ENCODE measurements at regions of chr13 and their contacts with region 1.

Region 1: GRCh38 chr13:49792550-49793324 is at the start of gene KPNA3:
- DNase-seq: peak; percentile 98
- H3K4me3 ChIP-seq: peak within 1 kb of the TSS; percentile 75
- H3K27ac ChIP-seq: peak within 1 kb of the TSS; percentile 90
- H3K4me1 ChIP-seq: peaks cover 24% of the 10 kb centered on the region
- CTCF ChIP-seq: no peak; the same call in 1 of the 2 replicates
- total RNA-seq, gene KPNA3: 17.2 and 18.2 TPM in 2 replicates

Region 2: DNA sequence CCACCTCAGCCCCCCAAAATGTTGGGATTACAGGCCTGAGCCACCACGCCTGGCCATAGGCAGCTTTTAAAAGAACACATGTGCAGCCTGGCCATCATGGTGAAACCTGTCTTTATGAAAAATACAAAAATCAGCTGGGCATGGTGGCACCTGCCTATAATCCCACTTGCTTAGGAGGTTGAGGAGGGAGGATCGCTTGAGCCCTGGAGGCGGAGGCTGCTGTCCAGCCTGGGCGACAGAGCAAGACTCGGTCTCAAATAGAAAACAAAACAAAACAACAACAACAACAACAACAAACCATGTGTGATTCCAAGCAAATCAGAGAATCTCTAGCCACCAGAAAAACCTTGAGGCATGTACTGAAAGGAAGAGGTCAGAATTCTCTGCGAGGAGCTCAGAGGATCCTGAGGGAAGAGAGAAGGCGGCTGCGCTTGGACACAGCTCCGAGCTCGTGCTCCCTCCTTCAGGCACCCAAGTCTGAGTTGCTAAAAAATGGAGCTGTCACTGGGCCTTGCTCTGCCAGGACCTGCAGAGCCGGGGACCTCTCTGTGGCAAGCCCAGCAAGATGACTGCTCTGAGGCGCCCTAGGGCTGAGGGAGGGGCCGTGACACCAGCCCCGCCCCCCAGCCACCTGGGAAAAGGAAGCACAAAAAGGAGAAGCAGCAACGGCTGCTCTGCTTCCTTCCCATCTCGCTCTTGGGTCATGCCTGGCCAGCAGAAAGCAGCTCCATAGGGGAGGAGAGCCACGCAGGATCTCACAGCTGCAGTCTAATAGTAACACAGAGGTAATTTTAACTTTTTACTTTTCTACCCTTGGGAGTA is 164.7 kb before region 1 on chr13 and contains the start of gene ARL11:
- CTCF ChIA-PET with region 1: interaction called, 4 read pairs
- POLR2A ChIA-PET with region 1: interaction called, 10 read pairs
- intact Hi-C with region 1: loop called (anchors 2 kb)
- DNase-seq: peak; percentile 93
- H3K4me3 ChIP-seq: peak within 1 kb of the TSS; percentile 90
- H3K27ac ChIP-seq: peak within 1 kb of the TSS; percentile 72
- H3K4me1 ChIP-seq: peaks cover 34% of the 10 kb centered on the region
- CTCF ChIP-seq: no peak
- total RNA-seq, gene ARL11: 5.9 and 8.3 TPM in 2 replicates

Region 3: DNA sequence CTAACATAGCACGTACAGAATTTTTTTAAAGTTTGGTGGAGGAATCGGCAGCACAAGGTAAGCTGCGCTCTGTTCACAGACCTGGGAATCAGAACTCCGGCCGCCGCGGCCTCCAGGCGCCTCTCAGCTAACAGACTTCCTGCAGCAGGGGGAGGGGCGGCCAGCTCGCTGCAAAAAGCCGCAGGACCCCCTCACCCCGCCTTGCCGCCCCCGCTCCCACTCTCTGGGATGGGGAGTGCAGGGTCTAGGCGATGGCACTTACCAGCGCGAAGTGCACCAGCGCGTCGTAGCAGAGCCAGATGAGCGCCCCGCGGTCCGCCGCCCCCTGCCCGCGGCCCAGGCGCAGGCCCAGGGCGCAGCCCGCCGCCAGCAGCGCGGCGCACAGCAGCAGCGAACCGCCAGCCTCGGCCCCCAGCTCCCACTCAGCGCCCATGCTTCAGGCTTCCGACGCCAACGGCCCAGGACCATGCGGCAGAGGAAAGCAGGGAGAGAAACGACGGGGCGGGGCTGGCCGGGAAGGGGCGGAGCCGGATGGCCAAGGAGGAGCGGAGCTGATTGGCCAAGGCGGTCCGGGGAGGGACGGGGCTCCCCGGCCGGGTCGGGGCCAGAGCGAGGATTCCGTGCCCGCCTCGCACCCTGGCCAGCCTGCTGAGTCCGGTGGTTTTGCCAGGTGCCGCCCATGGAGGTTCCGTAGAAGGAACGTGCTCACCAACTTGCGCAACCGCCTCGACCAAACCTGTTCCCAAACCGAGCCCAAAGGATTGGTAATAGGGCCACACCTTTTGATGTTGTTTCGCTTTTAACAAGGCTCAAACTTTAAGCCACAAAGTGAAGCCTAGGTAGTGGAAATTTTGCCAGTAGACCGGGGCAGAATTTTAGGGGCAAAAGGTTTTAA is 101.5 kb before region 1 on chr13 and contains the start of gene EBPL:
- CTCF ChIA-PET with region 1: interaction called, 4 read pairs
- POLR2A ChIA-PET with region 1: no interaction called
- intact Hi-C with region 1: loop called (anchors 2 kb)
- DNase-seq: peak; percentile 87
- H3K4me3 ChIP-seq: peak within 1 kb of the TSS; percentile 77
- H3K27ac ChIP-seq: peak within 1 kb of the TSS; percentile 60
- H3K4me1 ChIP-seq: peaks cover 23% of the 10 kb centered on the region
- CTCF ChIP-seq: 0 out of 2 replicates have a peak, but pooled peaks have one; percentile 7
- total RNA-seq, gene EBPL: 29.9 and 47.3 TPM in 2 replicates

Region 4: DNA sequence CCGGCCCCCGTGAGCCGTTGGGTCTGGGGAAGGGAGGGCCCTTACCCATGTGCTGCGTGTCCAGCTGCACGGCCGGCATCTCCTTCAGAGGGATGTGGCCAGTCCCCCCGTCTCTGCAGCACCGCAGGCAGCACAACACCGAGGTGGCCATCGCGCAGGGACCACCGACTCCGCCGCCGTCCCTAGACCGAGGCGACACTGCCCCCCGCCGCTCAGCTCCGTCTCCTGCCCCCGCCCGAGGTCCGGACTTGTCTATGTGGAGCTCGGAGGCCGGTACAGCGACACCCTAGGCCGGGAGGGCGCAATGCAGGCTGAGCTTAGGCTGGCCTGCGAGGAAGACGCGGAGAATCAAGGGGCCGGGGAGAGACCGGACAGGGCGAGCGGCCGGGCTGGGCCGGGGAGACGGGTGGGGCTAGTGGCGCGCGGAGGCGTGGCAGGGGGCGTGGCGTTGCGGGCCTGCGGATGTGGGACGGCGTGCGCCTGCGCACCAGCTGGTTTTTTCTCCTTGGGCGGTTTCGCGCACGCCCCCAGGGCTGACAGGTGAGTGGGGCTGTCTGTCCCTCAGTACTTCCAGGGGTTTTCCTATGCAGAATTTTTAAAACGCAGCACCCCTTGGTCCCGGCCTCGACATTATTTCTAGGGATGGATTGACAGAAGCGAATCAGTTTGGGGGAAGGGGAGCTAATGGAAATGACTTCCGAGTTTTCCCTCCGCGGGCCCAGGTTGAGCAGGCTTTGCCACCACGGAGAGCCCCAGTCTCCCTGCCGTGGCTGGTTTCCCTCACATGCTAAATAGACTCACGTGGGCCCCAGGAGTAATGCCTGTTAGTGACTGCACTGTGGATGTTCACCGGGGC is 143.6 kb after region 1 on chr13 and contains the start of gene SPRYD7:
- CTCF ChIA-PET with region 1: interaction called, 4 read pairs
- POLR2A ChIA-PET with region 1: interaction called, 8 read pairs
- intact Hi-C with region 1: loop called (anchors 5 kb)
- DNase-seq: peak; percentile 98
- H3K4me3 ChIP-seq: peak within 1 kb of the TSS; percentile 81
- H3K27ac ChIP-seq: peak within 1 kb of the TSS; percentile 34
- H3K4me1 ChIP-seq: peaks cover 29% of the 10 kb centered on the region
- CTCF ChIP-seq: peak; percentile 84
- total RNA-seq, gene SPRYD7: 5.0 and 6.8 TPM in 2 replicates

Measured in OCI-LY7 (cell line).